ENCODE measurements at regions of chr4 and their contacts with region 1.

Region 1: DNA sequence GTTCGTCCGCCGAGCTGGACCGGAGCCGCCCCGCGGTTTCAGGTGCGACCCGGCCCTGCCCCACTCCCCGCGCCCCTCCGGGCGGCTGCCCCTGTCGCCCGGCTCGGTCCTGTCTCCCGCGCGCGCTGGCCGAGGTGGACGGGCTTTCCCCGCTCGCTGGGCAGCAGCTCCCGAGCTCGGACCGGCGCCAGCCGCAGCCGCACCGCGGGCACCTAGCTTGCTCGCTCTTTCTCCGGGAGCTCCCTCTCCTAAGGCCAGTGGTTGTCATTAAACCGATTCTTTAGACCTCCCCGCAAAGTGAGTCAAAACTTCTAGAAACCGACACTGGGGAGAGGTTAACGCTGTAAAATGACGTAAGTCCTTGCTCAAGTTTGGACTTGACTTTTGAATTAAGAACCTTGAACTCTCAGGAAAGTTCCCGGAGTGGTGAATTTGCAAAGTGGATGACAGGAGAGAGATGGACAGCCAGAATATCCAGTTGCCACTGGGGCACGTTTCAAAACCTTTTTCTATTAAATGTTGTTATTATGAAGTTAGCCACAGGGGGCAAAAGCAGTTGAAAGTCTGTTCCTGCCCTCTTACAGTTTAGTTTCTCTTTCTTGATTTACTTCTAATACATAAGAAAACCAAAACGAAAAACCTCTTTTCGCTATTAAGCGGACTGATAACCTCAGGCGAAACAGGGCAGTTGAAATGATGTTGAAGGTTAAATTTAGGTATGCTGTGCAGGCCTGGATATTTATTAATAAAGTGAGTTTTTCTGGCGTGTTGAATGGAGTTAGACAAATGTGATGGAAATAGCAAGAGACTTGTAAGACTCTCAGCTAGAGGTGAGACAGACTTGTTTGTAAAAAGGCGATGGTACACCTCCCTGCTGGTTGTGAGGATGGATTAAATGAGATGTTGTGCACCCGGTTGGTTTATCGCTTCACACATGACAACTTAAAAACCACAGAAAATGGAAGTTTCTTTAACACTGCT is 847 bp downstream of the PI4K2B start:
- DNase-seq: peak; percentile 18 to 42
- ATAC-seq: peak; percentile 72 to 76
- H3K4me3 ChIP-seq: peak overlapping the region; percentile 78 to 92 (median 80)
- H3K27ac ChIP-seq: peak overlapping the region; percentile 89 to 98 (median 94)
- H3K4me1 ChIP-seq: peaks cover 3 to 11% of the 10 kb centered on the region in 2 donors
- H3K27me3 ChIP-seq: no peaks in the 10 kb centered on the region
- CTCF ChIP-seq: peak in 3 of 5 experiments; percentile 40 to 49 (median 42)
- POLR2A ChIP-seq: no peak

Region 2: GRCh38 chr4:24372881-24373280 is 861.8 kb before region 1 on chr4:
- in situ Hi-C with region 1: no loop called
- intact Hi-C with region 1: no loop called
- DNase-seq: no peak
- ATAC-seq: no peak
- H3K4me3 ChIP-seq: no peak overlapping the region
- H3K27ac ChIP-seq: no peak overlapping the region
- H3K4me1 ChIP-seq: peaks cover 6 to 11% of the 10 kb centered on the region in 2 donors
- H3K27me3 ChIP-seq: no peaks in the 10 kb centered on the region
- CTCF ChIP-seq: no peak
- POLR2A ChIP-seq: no peak

Region 3: GRCh38 chr4:24584175-24584850 is 650.4 kb before region 1 on chr4 and contains the start of gene DHX15:
- in situ Hi-C with region 1: no loop called
- intact Hi-C with region 1: loop called (anchors 10 kb)
- DNase-seq: peak; percentile 91 to 95
- ATAC-seq: peak; percentile 93 to 94
- H3K4me3 ChIP-seq: peak within 1 kb of the TSS; percentile 81 to 98 (median 94)
- H3K27ac ChIP-seq: peak within 1 kb of the TSS; percentile 92 to 99 (median 98)
- H3K4me1 ChIP-seq: peaks cover 29 to 37% of the 10 kb centered on the region in 2 donors
- H3K27me3 ChIP-seq: no peaks in the 10 kb centered on the region
- CTCF ChIP-seq: peak in 3 of 5 experiments; percentile 10 to 11 (median 11)
- POLR2A ChIP-seq: peak; percentile 84 to 86
- total RNA-seq, gene DHX15: 50.1 to 88.1 (median 61.2) TPM

Region 4: GRCh38 chr4:25043548-25043947 is 191.1 kb before region 1 on chr4:
- in situ Hi-C with region 1: no loop called
- intact Hi-C with region 1: no loop called
- DNase-seq: no peak
- ATAC-seq: no peak
- H3K4me3 ChIP-seq: no peak overlapping the region
- H3K27ac ChIP-seq: no peak overlapping the region
- H3K4me1 ChIP-seq: no peaks in the 10 kb centered on the region
- H3K27me3 ChIP-seq: peaks cover 0 to 4% (median 3%) of the 10 kb centered on the region in 3 donors
- CTCF ChIP-seq: no peak
- POLR2A ChIP-seq: no peak

Region 5: GRCh38 chr4:25172961-25173915 is 61.4 kb before region 1 on chr4:
- in situ Hi-C with region 1: loop called in 2 of 4 experiments (anchors 10 kb)
- intact Hi-C with region 1: loop called (anchors 1 kb)
- DNase-seq: peak; percentile 69 to 76
- ATAC-seq: peak; percentile 100
- H3K4me3 ChIP-seq: peak overlapping the region in 1 of 4 donors; percentile 0
- H3K27ac ChIP-seq: peak overlapping the region; percentile 25 to 66 (median 62)
- H3K4me1 ChIP-seq: peaks cover 15 to 16% of the 10 kb centered on the region in 2 donors
- H3K27me3 ChIP-seq: no peaks in the 10 kb centered on the region
- CTCF ChIP-seq: no peak
- POLR2A ChIP-seq: no peak

Region 6: DNA sequence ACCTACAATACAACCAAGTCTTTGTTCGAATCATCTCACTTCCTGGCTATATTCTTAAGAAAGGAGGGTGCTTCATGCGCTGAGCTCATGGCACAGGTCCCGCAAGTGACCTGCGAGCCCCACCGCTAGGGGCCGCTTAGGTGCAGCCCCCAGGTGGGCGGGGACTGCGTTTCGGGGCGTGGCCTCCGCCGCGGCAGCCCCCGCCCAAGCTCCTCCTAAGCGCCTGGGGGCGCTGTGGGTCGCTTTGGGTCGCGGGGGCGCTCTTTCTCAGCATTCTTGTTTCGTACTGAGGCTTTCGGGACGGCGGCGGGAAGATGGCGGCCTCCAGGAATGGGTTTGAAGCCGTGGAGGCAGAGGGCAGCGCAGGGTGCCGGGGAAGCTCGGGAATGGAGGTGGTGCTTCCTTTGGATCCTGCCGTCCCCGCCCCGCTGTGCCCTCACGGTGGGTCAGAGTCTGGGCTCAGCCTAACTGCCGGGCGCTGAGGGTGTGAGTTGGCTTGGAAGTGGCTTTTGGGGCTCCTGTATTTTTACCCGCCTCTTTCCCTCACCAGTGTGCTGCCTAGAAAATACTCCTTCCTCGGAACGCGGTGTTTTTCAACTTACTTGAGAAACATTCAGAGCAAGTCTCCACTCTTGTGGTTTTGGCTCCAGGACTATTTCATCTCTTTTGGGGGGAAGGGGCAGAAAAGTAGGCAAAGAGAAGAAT is 78.0 kb after region 1 on chr4 and contains the start of gene ZCCHC4:
- in situ Hi-C with region 1: loop called in 2 of 4 experiments (anchors 10 kb)
- intact Hi-C with region 1: loop called (anchors 1 kb)
- DNase-seq: peak; percentile 68 to 84
- ATAC-seq: peak; percentile 96 to 99
- H3K4me3 ChIP-seq: peak within 1 kb of the TSS; percentile 70 to 84 (median 74)
- H3K27ac ChIP-seq: peak within 1 kb of the TSS; percentile 64 to 78 (median 73)
- H3K4me1 ChIP-seq: peaks cover 5 to 8% of the 10 kb centered on the region in 2 donors
- H3K27me3 ChIP-seq: no peaks in the 10 kb centered on the region
- CTCF ChIP-seq: peak; percentile 72 to 99 (median 93)
- POLR2A ChIP-seq: no peak
- total RNA-seq, gene ZCCHC4: 6.9 to 14.2 (median 12.4) TPM

Measured in gastrocnemius medialis (tissue), 4 donors.